Activated naive CD8-positive, alpha-beta T cell treated with anti-CD3 and anti-CD28 coated beads, Interleukin-2, amount 10 ng/mL, durations not matched to agents 7 days and 5 days (primary cell): ENCODE measurements at regions of chr7 and their contacts with region 1.

Region 1: GRCh38 chr7:107168233-107169119 is at the start of gene HBP1:
- DNase-seq: peak; percentile 90
- ATAC-seq: peak; percentile 89
- H3K4me3 Mint-ChIP-seq: peak within 1 kb of the TSS; percentile 96
- H3K27ac Mint-ChIP-seq: peak within 1 kb of the TSS; percentile 98
- H3K4me1 Mint-ChIP-seq: peaks cover 17% of the 10 kb centered on the region
- H3K27me3 Mint-ChIP-seq: peaks cover 2% of the 10 kb centered on the region
- total RNA-seq, gene HBP1: 56.4 to 58.3 TPM

Region 2: DNA sequence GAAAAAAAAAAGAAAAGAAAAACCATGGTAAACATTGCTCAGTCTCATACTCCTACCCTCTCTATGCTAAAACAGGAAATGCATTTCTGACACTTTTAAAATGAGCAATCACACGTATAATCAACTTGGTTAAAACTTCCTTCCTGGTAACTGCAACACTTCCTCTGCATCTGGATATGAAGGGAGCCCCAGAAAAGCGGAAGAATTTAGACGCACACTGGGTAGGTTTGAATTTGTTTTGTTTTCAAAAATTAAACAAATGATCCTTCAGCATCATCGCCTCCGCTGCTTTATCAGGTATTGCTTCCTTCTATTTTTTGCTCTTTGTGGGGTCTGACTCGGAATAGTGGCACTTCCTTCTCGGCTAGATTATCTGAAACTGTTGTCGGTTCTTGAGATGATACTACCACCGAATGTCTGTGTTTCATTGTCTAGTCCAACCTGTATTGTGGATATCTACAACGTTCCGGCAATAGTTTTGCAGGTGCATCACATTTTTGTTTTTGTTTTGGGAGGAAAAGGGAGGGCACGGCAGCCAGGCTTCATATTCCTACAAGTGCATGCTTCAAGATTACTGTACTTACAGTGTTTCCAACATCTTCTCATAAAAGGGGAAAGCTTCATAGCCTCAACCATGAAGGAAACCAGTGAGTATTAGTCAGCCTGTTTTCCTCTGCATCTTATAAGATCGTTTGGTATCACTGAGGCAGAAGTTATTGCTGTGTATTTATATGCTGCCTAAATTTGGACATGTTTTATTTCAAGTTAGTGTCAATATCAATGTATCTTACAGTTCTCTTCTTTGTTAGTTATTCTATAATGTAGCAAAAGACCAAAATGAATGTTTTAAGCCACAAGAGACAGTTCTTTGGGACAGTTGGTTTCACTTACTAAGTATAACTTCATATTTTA is 303.1 kb before region 1 on chr7 and contains the start of gene PIK3CG:
- POLR2A ChIA-PET with region 1: interaction called, 11 read pairs
- DNase-seq: no peak
- ATAC-seq: peak; percentile 91
- H3K4me3 Mint-ChIP-seq: peak within 1 kb of the TSS; percentile 95
- H3K27ac Mint-ChIP-seq: peak within 1 kb of the TSS; percentile 97
- H3K4me1 Mint-ChIP-seq: peaks cover 39% of the 10 kb centered on the region
- H3K27me3 Mint-ChIP-seq: no peaks in the 10 kb centered on the region
- total RNA-seq, gene PIK3CG: 54.1 to 55.9 TPM

Region 3: DNA sequence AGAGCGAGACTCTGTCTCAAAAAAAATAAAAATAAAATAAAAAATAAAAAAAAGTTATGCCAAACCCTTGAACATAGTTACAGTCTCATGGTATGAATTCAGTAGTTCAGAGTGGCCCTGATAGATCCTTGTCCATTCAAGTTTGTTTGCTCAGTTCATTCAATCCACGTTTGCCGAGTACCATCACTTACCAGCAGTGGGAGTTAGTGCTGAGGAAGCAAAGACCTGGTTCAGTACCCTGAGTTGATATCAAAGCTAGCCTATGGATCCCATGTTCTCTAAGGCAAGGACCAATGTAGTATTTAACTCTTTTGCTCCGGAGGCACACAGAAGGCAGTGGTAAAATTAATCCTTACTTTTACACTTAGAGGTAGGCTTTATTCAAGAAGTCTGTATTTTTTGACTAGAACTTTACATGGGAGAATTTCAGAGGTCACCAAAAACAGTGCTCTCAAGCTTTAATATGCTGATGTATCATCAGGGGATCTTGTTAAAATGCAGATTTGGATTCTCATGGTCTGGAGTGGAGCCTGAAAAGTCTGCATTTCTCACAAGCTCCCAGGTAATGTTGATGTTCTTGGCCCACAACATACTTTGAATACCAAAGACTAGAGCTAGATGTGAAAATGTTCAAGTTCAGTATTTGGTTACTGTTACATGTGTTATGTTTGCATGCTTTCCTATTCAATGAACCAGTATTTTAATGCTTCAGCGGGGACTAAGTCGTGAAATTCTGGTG is 37.8 kb before region 1 on chr7:
- POLR2A ChIA-PET with region 1: interaction called, 10 read pairs
- DNase-seq: no peak
- ATAC-seq: no peak
- H3K4me3 Mint-ChIP-seq: no peak overlapping the region
- H3K27ac Mint-ChIP-seq: no peak overlapping the region
- H3K4me1 Mint-ChIP-seq: peaks cover 13% of the 10 kb centered on the region
- H3K27me3 Mint-ChIP-seq: peaks cover 2% of the 10 kb centered on the region